T-cell (primary cell): ENCODE measurements at regions of chr22 and their contacts with region 1.

Region 1: DNA sequence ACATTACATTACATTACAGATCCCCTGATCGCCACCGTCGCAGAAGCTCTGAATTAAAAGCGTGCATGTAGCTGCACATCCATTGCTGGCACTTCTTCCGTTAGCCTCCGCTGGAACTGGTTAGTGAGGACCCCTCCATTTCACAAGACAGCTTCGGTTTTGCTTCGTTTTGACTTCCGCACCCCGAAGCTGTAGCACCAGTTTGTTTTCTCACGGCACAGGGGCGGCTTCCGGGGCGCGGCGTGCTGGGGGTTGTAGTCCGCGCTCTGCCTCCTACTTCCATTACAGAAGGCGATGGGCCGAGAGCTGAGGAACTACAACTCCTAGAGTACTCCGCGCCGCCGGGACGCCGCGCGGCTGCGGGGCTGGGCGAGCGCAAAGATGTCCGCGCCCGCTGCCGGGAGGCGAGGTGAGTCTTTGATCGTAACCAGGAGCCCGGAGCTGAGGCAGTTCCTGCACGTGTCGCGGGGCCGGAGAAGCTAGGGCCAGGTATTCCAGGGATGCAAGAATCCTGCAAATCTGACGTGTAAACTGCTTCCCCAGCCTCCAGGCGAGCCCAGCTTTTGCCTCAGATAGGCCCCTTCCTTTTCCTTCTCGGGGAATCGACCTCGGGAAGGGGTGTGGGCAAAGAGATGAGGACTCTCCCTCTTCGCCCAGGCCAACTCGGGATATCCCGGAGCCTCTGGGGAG is at the start of gene PEX26:
- DNase-seq: peak; percentile 88 to 98 (median 95)
- ATAC-seq: peak; percentile 99 to 100 (median 100)
- H3K4me3 ChIP-seq: peak within 1 kb of the TSS; percentile 84 to 85
- H3K4me3 Mint-ChIP-seq: peak within 1 kb of the TSS; percentile 94 to 96 (median 95)
- H3K27ac ChIP-seq: peak within 1 kb of the TSS; percentile 77
- H3K27ac Mint-ChIP-seq: peak within 1 kb of the TSS; percentile 98 to 100
- H3K4me1 ChIP-seq: peaks cover 14 to 29% of the 10 kb centered on the region in 2 experiments
- H3K4me1 Mint-ChIP-seq: peaks cover 54 to 64% (median 55%) of the 10 kb centered on the region in 3 donors
- H3K27me3 ChIP-seq: no peaks in the 10 kb centered on the region
- H3K27me3 Mint-ChIP-seq: no peaks in the 10 kb centered on the region
- total RNA-seq, gene PEX26: 30.2 to 42.7 (median 39.8) TPM

Region 2: DNA sequence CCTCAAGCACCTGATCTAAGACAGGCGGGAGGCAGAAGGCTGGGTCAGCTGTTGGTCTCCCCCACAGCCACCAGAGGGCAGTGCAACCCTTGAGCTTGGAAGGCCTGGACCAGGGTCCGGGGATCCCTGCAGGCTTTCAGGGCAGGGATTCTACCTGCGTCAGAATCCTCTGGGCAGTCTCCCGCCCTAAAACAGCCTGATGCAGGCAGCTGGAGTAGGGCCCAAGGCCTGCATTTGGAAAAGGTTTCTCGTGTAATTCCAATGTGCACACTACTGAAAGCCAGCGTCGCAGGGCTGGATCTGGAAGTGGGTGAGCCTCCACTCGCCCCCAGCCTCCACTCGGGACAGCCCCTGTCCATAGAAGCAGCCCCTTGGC is 335.3 kb before region 1 on chr22:
- CTCF ChIA-PET with region 1: interaction called, 4 to 19 read pairs
- POLR2A ChIA-PET with region 1: no interaction called
- DNase-seq: peak; percentile 19 to 80 (median 55)
- ATAC-seq: peak; percentile 66 to 79 (median 76)
- H3K4me3 ChIP-seq: no peak overlapping the region
- H3K4me3 Mint-ChIP-seq: no peak overlapping the region
- H3K27ac ChIP-seq: no peak overlapping the region
- H3K27ac Mint-ChIP-seq: no peak overlapping the region
- H3K4me1 ChIP-seq: peaks cover 0 to 8% of the 10 kb centered on the region in 2 experiments
- H3K4me1 Mint-ChIP-seq: peaks cover 0 to 7% (median 6%) of the 10 kb centered on the region in 3 donors
- H3K27me3 ChIP-seq: no peaks in the 10 kb centered on the region
- H3K27me3 Mint-ChIP-seq: no peaks in the 10 kb centered on the region

Region 3: GRCh38 chr22:17830043-17830961 is 247.5 kb before region 1 on chr22:
- CTCF ChIA-PET with region 1: interaction called, 11 to 41 read pairs
- POLR2A ChIA-PET with region 1: interaction called in 1 of 2 experiments, 3 read pairs
- DNase-seq: peak; percentile 44 to 89 (median 73)
- ATAC-seq: peak; percentile 89 to 95 (median 93)
- H3K4me3 ChIP-seq: no peak overlapping the region
- H3K4me3 Mint-ChIP-seq: no peak overlapping the region
- H3K27ac ChIP-seq: no peak overlapping the region
- H3K27ac Mint-ChIP-seq: peak overlapping the region in 1 of 2 donors; percentile 25
- H3K4me1 ChIP-seq: peaks cover 0 to 10% of the 10 kb centered on the region in 2 experiments
- H3K4me1 Mint-ChIP-seq: peaks cover 7 to 10% (median 8%) of the 10 kb centered on the region in 3 donors
- H3K27me3 ChIP-seq: no peaks in the 10 kb centered on the region
- H3K27me3 Mint-ChIP-seq: no peaks in the 10 kb centered on the region